ENCODE measurements at regions of chr6 and their contacts with region 1.

Region 1: GRCh38 chr6:169751242-169752073 is at the starts of genes DYNLT2 and ERMARD:
- DNase-seq: peak; percentile 90 to 99 (median 93)

Region 2: DNA sequence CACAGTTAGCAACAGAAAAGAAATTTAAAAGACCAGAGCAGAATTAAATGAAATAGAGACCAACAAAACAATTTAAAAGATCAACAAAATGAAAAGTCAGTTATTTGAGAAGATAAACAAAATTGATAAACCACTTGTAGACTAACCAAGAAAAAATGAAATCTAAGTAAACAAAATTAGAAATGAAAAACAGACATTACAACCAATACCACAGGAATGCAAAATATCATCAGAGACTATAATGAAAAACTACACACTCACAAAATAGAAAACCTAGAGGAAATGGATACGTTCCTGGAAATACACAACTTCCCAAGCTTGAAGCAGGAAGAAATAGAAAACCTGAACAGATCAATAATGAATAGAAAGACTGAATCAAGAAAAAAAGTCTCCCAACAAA is 147.4 kb before region 1 on chr6:
- intact Hi-C with region 1: no loop called
- DNase-seq: no peak

Region 3: GRCh38 chr6:169701954-169702839 is 49.3 kb before region 1 on chr6 and contains the starts of genes C6orf120 and WDR27:
- intact Hi-C with region 1: loop called (anchors 2 kb)
- DNase-seq: peak; percentile 88 to 99 (median 95)

Region 4: GRCh38 chr6:169724494-169725124 is 26.8 kb before region 1 on chr6 and contains the start of gene PHF10:
- intact Hi-C with region 1: loop called (anchors 1 kb)
- DNase-seq: peak; percentile 40 to 93 (median 64)

Region 5: DNA sequence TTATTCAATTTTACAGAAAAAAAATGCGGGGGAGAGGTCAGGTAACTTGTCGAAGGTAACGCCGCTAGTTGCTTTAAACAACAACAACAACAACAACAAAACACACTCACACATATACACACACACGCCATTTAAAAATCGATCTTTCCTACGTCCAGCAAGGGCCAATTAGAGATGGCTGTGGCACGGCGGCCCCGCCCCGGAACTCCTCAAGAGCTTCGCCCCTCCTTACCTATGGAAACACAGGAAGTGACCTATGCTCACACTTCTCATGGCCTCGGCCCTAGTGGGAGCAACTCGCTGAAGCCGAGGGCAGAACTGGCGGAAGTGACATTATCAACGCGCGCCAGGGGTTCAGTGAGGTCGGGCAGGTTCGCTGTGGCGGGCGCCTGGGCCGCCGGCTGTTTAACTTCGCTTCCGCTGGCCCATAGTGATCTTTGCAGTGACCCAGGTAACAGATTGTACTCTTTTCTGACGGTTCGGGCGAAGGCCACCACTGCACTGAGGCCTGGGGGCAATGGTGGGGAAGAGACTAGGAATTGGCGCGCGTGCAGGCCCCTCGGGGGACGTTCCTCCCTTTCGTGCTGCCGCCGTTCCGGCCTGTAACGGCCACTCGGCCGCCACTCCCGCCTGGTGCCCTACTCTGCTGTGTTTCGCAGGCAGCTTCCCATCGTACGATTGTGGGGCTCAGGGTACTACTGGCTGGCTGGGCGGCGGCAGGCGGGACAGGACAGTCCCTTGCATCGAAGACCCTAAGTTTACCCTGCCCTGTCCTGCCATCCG is 802.7 kb after region 1 on chr6 and contains the start of gene TBP:
- intact Hi-C with region 1: loop called (anchors 2 kb)
- DNase-seq: peak; percentile 98 to 100 (median 99)